Caco-2 (cell line): ENCODE measurements at regions of chr2 and their contacts with region 1.

Region 1: DNA sequence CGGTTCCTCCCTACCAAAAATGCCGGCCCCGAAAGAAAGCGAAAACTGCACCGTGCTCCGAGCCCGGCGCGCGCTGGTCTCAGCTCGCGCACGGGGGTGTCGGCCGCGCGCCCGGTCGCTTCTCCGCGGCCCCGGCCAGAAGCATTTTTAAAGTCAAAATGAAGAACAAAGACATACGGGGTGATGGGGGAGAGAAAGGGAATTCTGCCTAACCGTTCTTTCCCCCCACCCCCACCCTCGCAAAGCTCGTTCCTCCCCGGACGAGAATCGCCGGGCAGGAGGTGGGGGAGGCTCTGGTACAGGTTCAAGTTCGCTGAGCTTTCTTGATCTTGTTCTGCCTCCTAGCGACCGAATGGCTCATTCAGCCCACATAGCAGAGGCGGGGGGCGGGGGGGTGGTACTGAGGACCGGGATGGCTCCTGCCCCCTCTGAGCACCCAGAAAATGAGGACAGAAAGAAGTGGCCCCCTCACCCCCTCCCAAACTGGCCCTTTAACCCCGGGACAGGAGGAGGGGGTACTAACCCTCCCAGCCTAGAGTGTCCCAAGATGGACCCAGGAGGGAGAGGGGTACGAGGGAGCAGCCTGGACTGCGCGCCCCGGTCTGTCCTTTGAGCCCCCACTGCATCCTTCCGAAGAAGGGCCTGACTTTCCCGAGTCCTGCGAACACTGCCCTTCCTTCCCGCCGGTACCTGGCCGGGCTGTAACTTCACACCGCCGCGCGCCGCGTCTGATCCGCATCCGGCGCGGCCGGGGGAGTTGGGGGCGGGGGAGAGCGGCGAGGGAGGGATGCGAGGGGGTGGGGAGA is 3.1 kb downstream of the BCL11A start:
- DNase-seq: peak; percentile 59 to 67
- H3K4me3 ChIP-seq: peak overlapping the region; percentile 65
- H3K4me3 Mint-ChIP-seq: peak overlapping the region; percentile 79
- H3K27ac Mint-ChIP-seq: no peak overlapping the region
- H3K4me1 ChIP-seq: peaks cover 14% of the 10 kb centered on the region
- H3K4me1 Mint-ChIP-seq: peaks cover 8% of the 10 kb centered on the region
- H3K27me3 ChIP-seq: no peaks in the 10 kb centered on the region
- H3K27me3 Mint-ChIP-seq: peaks cover 27% of the 10 kb centered on the region
- CTCF ChIP-seq: peak; percentile 57 to 76

Region 2: GRCh38 chr2:59932341-59932740 is 618.0 kb before region 1 on chr2:
- CTCF ChIA-PET with region 1: no interaction called
- POLR2A ChIA-PET with region 1: no interaction called
- intact Hi-C with region 1: loop called (anchors 10 kb)
- DNase-seq: no peak
- H3K4me3 ChIP-seq: no peak overlapping the region
- H3K4me3 Mint-ChIP-seq: no peak overlapping the region
- H3K27ac Mint-ChIP-seq: no peak overlapping the region
- H3K4me1 ChIP-seq: no peaks in the 10 kb centered on the region
- H3K4me1 Mint-ChIP-seq: no peaks in the 10 kb centered on the region
- H3K27me3 ChIP-seq: no peaks in the 10 kb centered on the region
- H3K27me3 Mint-ChIP-seq: peaks cover 3% of the 10 kb centered on the region
- CTCF ChIP-seq: peak in 1 of 2 experiments; percentile 41

Region 3: GRCh38 chr2:60213865-60214625 is 336.3 kb before region 1 on chr2:
- CTCF ChIA-PET with region 1: no interaction called
- POLR2A ChIA-PET with region 1: no interaction called
- intact Hi-C with region 1: loop called (anchors 10 kb)
- DNase-seq: peak in 1 of 2 experiments; percentile 18
- H3K4me3 ChIP-seq: no peak overlapping the region
- H3K4me3 Mint-ChIP-seq: no peak overlapping the region
- H3K27ac Mint-ChIP-seq: no peak overlapping the region
- H3K4me1 ChIP-seq: peaks cover 18% of the 10 kb centered on the region
- H3K4me1 Mint-ChIP-seq: no peaks in the 10 kb centered on the region
- H3K27me3 ChIP-seq: no peaks in the 10 kb centered on the region
- H3K27me3 Mint-ChIP-seq: no peaks in the 10 kb centered on the region
- CTCF ChIP-seq: no peak

Region 4: DNA sequence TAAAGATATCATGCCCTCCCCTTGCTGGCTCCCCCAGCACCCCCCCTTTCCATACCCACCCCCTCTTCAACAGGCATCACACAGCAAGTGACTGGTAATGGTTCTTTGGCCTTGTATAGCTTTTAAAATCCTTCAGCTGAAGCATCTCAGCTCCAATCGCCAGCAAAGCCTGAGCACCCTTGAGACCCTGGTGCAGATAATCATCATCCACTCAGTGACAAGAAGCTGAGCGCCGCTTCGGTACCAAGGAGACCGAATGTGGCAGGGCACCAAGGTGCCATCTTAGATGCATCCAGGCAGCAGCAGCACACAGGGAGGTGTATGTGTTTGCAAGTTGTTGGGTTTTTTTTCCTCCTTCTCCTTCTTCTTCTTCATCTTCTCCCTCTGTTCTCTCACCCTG is 229.7 kb before region 1 on chr2:
- CTCF ChIA-PET with region 1: interaction called, 6 read pairs
- POLR2A ChIA-PET with region 1: no interaction called
- intact Hi-C with region 1: loop called (anchors 5 kb)
- DNase-seq: no peak
- H3K4me3 ChIP-seq: no peak overlapping the region
- H3K4me3 Mint-ChIP-seq: no peak overlapping the region
- H3K27ac Mint-ChIP-seq: no peak overlapping the region
- H3K4me1 ChIP-seq: 0 out of 2 replicates have a peak, but pooled peaks cover 3% of the 10 kb centered on the region
- H3K4me1 Mint-ChIP-seq: peaks cover 6% of the 10 kb centered on the region
- H3K27me3 ChIP-seq: no peaks in the 10 kb centered on the region
- H3K27me3 Mint-ChIP-seq: peaks cover 3% of the 10 kb centered on the region
- CTCF ChIP-seq: no peak

Region 5: DNA sequence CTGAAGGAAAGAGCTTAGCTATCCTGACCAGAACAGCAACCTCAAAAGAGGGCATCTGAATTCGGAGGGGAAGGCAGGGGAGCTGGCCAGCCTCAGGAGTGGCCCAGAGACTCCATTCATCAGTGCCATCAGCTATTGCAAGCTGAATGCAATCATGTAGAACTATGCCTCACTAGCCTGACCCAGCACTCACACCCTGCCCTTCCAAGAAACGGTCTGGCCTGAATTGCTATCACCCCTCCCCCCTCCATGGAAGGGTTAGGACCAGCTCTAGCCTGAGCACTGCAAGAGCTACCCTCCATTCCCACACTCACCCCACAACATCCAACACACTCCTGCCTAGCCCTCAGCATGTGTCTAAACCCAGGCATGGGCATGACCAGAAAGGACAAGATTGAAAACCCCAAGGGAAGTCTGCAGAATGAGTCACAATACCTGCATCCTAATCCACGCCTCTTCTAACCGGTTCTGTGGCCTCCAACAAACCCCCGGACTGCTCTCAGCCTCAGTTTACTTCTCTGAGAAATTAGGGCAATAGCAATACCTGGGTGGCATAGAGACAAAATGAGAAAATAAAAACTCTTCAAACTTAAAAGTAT is 117.3 kb before region 1 on chr2:
- CTCF ChIA-PET with region 1: interaction called, 10 read pairs
- POLR2A ChIA-PET with region 1: no interaction called
- intact Hi-C with region 1: loop called (anchors 5 kb)
- DNase-seq: no peak
- H3K4me3 ChIP-seq: no peak overlapping the region
- H3K4me3 Mint-ChIP-seq: no peak overlapping the region
- H3K27ac Mint-ChIP-seq: peak overlapping the region; percentile 17
- H3K4me1 ChIP-seq: peaks cover 24% of the 10 kb centered on the region
- H3K4me1 Mint-ChIP-seq: peaks cover 24% of the 10 kb centered on the region
- H3K27me3 ChIP-seq: no peaks in the 10 kb centered on the region
- H3K27me3 Mint-ChIP-seq: no peaks in the 10 kb centered on the region
- CTCF ChIP-seq: no peak

Region 6: GRCh38 chr2:60488291-60488690 is 62.1 kb before region 1 on chr2:
- CTCF ChIA-PET with region 1: no interaction called
- POLR2A ChIA-PET with region 1: no interaction called
- intact Hi-C with region 1: no loop called
- DNase-seq: no peak
- H3K4me3 ChIP-seq: no peak overlapping the region
- H3K4me3 Mint-ChIP-seq: no peak overlapping the region
- H3K27ac Mint-ChIP-seq: no peak overlapping the region
- H3K4me1 ChIP-seq: no peaks in the 10 kb centered on the region
- H3K4me1 Mint-ChIP-seq: peaks cover 9% of the 10 kb centered on the region
- H3K27me3 ChIP-seq: no peaks in the 10 kb centered on the region
- H3K27me3 Mint-ChIP-seq: no peaks in the 10 kb centered on the region
- CTCF ChIP-seq: no peak

Region 7: DNA sequence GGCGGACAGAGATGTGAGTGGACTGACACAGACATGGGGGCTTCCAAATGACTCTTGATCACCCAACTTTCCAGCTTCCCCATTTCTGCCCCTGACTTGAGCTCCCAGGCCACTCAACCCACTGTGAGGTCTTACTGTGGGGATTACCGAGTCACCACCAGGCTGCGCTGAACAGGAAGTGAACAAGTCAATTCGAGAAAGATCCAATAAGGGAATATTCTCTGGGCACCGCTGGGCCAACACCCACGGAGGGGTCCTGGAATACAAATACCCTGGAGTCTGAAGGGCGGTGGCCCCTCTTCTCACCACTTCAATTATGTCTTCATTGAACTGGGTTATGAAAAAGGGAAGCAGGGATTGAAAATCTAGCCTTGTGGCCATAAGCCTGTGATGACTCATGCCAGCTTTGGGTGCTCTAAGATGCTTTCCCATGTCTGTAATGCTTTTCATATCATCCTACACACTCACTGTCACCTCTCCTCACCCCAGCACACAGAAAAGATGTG is 34.6 kb before region 1 on chr2:
- CTCF ChIA-PET with region 1: interaction called, 4 read pairs
- POLR2A ChIA-PET with region 1: no interaction called
- intact Hi-C with region 1: loop called (anchors 2 kb)
- DNase-seq: no peak
- H3K4me3 ChIP-seq: no peak overlapping the region
- H3K4me3 Mint-ChIP-seq: no peak overlapping the region
- H3K27ac Mint-ChIP-seq: peak overlapping the region; percentile 83
- H3K4me1 ChIP-seq: peaks cover 45% of the 10 kb centered on the region
- H3K4me1 Mint-ChIP-seq: peaks cover 28% of the 10 kb centered on the region
- H3K27me3 ChIP-seq: no peaks in the 10 kb centered on the region
- H3K27me3 Mint-ChIP-seq: no peaks in the 10 kb centered on the region
- CTCF ChIP-seq: no peak